ENCODE measurements at regions of chr17 and their contacts with region 1.

Region 1: GRCh38 chr17:34361478-34362061 is 1.5 kb downstream of the CCL1 start:
- DNase-seq: peak; percentile 93

Region 2: GRCh38 chr17:34306466-34306865 is 55.1 kb before region 1 on chr17:
- intact Hi-C with region 1: loop called (anchors 2 kb)
- DNase-seq: no peak